ENCODE measurements at regions of chr17 and their contacts with region 1.

Region 1: DNA sequence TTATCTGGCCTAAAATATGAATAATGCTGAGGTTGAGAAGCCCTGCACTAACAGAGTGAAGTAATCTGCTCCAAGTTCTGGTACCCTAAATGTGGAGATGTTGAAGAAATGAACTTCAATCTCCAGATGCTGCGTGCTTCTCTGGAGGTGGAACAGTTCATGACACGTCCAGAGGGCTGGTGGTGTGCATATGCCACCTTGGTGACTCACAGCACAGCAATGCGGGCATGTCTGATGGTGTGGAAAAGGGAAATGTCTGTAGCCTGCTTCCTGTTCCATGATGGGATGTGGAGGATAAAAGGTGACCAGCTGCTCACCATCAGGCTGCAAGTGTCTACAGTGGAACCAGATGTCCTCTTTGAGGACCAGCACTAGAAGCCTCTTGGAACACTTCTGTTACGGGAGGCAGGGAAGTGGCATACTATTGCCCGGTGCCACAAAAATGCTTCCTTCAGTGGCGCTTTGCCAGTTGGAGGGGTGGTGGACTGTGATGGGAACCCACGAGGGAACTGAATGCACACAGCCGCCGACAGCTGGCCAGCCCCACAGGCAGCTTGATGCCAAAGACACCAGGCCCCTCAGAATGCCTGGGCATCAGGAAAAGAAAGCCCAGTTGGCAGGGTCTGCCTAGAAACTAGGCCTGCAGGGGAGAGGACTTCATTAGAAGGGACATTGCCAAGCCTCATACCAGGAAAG is 19.9 kb downstream of the SNX11 start:
- DNase-seq: no peak

Region 2: GRCh38 chr17:48037036-48037837 is 90.3 kb before region 1 on chr17 and contains the start of gene COPZ2:
- in situ Hi-C with region 1: loop called (anchors 10 kb)
- DNase-seq: no peak